ENCODE measurements at regions of chr12 and their contacts with region 1.

Region 1: GRCh38 chr12:27539191-27539631 is 15.2 kb downstream of the PPFIBP1 start:
- DNase-seq: no peak
- ATAC-seq: peak; percentile 38

Region 2: DNA sequence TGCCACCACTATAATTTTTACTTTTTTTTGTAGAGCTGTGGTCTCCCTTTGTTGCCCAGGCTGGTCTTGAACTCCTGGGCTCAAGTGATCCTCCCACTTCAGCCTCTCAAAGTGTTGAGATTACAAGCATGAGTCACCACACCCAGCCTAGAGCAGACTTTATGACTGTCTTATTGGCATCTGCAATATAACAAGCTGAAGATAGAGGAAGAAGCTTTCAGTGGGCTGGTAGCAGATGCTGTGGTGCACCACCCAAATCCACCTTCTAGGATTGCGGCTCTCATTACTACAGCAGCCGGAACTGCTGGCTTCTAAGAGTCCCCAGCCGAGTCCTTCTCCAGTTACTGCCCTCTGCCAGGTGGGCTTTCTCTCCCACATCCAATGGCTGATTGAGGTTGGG is 302.7 kb before region 1 on chr12:
- intact Hi-C with region 1: no loop called
- DNase-seq: no peak
- ATAC-seq: no peak

Region 3: DNA sequence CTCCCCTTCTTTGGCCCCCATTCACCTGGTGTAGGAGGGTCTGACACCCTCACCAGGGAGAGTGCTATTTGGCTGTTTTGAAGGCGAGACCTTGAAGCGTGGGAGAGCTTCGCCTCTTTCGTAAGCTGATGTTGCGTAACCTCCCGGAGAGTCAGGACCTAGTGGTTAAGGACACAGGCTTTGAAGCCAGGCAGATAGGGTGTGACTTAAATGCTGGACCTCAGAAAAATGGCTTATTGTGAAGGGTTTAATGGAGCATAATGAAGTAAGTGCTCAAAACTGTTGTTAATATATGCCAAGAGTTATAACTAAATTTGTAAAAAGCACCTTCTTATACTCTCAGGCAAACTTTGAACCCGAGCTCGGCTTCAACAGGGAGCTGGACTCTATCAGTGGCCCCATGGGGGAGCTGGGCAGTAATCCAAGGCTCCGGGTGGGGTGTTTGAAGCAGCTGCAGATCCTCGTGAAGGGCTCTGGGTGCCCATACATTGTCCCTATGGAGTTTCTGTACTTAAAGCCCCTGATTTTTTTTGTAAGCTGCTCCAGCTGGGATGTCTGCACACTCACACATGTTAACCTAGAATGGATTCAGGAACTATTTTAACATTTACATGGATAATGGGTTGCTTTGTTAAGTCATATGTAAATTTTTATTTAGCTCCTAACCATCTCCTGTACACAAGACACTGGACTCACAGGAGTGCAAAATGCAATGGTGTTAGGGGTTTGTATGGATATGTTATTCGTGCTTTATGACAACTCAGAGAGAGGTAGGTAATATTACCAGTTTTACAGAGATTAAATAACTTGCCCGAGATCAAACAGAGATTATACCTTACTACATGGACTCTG is 10.8 kb after region 1 on chr12:
- intact Hi-C with region 1: loop called (anchors 2 kb)
- DNase-seq: peak; percentile 85
- ATAC-seq: peak; percentile 88